ENCODE measurements at regions of chr14 and their contacts with region 1.

Region 1: DNA sequence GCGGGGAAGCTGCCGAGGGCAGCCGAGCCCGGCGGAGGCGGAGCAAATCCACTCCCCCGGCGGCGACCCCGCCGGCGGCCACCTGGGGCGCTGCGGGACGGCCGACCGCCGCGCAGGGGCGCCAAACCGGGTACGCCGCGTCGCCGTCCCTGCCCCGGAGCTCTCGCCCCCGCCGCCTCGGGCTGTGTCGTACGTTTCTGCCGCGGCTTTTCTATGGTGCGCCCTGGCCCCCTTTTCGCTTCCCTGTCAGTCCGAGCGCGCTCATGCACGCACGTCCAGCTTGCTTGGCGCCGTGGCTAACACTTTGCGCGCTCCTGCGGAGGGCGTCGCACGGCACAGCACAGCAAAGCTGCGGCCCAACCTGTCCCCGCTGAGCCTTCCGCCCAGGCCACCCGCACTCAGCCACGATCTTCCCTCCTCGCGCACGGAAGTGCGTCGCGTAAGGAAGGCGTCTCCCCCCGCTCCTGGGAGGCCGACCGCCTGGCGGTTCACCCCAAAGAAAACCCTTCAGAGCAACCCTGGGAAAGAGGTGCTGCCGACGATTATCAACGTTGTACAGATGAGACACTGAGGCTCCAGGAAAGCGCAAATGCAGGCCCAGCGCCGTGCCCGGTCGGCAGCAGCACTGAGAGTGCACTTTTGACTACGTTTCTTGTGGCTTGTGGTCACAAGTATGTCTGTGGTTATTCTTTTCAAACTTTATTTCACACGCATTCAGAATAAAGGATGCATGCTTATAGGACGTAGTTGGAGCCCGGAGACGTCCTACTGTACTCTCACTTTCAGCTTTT is at the start of gene HECTD1:
- DNase-seq: peak; percentile 84
- ATAC-seq: peak; percentile 95
- H3K4me3 ChIP-seq: peak within 1 kb of the TSS; percentile 87
- H3K27ac ChIP-seq: peak within 1 kb of the TSS; percentile 98
- H3K4me1 ChIP-seq: peaks cover 2% of the 10 kb centered on the region; the same call in 1 of the 2 replicates
- H3K27me3 ChIP-seq: no peaks in the 10 kb centered on the region
- CTCF ChIP-seq: peak; percentile 96
- POLR2A ChIP-seq: peak; percentile 45; the same call in 1 of the 2 replicates
- RAD21 ChIP-seq: peak; percentile 69
- total RNA-seq, gene HECTD1: 222 and 228 TPM in 2 replicates

Region 2: DNA sequence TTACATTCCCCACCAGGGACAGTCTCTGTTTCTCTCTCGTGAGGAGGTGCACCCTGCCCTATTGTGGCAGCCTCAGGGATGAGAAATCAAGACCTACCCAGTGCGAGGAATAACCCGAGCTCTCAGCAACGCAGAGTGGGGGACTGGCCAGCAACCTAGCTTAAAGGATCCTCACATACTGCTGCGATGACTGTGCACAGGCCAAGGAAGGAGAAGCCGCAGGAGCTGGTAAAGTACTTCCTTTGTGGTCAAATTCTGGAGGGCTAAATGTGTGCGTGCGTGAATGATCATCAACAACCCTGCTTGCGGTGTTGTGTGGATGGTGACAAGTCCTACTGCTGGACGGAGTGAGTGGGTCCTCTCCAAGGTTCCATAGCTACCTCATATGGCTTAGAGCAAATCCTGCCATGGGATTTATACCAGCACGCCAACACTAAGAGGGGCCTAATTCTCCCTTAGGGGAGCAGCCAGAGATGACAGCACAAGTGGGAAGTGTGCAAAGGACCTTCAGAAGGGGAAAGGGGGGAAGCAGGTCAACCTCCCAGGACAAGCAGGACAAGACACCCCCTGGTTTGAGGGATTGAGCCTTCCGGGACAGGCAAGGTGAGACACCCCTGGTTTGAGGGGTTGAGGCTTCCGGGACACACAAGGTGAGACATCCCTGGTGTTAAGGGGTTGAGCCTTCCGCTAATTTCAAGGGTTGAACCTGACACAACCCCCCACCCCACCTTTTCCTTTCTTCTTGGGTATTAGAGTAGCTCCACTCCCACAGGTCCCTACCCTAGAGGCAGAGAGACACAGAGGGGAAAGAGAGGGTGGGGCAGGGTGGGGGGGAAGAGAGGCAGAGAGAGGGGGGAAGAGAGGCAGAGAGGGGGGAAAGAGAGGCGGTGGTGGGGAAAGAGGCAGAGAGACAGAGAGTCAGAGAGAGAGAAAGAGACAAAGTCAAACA is 241.3 kb before region 1 on chr14:
- CTCF ChIA-PET with region 1: no interaction called
- POLR2A ChIA-PET with region 1: no interaction called
- dilution Hi-C with region 1: no loop called
- in situ Hi-C with region 1: no loop called
- intact Hi-C with region 1: no loop called
- DNase-seq: peak; percentile 26
- ATAC-seq: no peak
- H3K4me3 ChIP-seq: no peak overlapping the region
- H3K27ac ChIP-seq: no peak overlapping the region
- H3K4me1 ChIP-seq: no peaks in the 10 kb centered on the region
- H3K27me3 ChIP-seq: no peaks in the 10 kb centered on the region
- CTCF ChIP-seq: no peak
- POLR2A ChIP-seq: no peak
- RAD21 ChIP-seq: no peak

Region 3: DNA sequence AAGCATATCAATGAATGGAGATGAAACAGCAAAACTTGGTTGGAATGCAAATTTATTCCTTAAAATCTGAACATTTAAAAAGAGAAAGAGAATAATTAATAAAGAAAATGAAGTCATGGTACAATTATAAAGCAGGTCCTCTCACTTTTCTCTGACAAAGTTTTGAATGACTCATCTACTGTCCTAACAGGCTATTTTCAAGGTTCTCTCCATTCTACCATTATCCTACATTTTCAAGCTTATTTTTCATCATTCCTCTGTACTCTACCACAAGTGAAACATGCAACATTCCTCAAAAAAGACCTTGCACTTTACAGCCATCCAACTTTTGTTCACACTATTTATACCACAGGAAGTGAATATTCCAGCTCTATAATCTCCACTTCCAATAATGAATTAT is 219.4 kb before region 1 on chr14:
- CTCF ChIA-PET with region 1: no interaction called
- POLR2A ChIA-PET with region 1: no interaction called
- dilution Hi-C with region 1: no loop called
- in situ Hi-C with region 1: no loop called
- intact Hi-C with region 1: loop called (anchors 10 kb)
- DNase-seq: peak; percentile 61
- ATAC-seq: peak; percentile 54
- H3K4me3 ChIP-seq: no peak overlapping the region
- H3K27ac ChIP-seq: no peak overlapping the region
- H3K4me1 ChIP-seq: peaks cover 7% of the 10 kb centered on the region
- H3K27me3 ChIP-seq: no peaks in the 10 kb centered on the region
- CTCF ChIP-seq: no peak
- POLR2A ChIP-seq: no peak
- RAD21 ChIP-seq: no peak

Region 4: GRCh38 chr14:31137214-31137889 is 70.6 kb before region 1 on chr14:
- CTCF ChIA-PET with region 1: no interaction called
- POLR2A ChIA-PET with region 1: no interaction called
- dilution Hi-C with region 1: no loop called
- in situ Hi-C with region 1: no loop called
- intact Hi-C with region 1: loop called (anchors 5 kb)
- DNase-seq: no peak
- ATAC-seq: peak; percentile 29
- H3K4me3 ChIP-seq: no peak overlapping the region
- H3K27ac ChIP-seq: peak overlapping the region; percentile 63; the same call in 1 of the 2 replicates
- H3K4me1 ChIP-seq: peaks cover 6% of the 10 kb centered on the region
- H3K27me3 ChIP-seq: no peaks in the 10 kb centered on the region
- CTCF ChIP-seq: no peak
- POLR2A ChIP-seq: no peak
- RAD21 ChIP-seq: no peak

Region 5: GRCh38 chr14:31263485-31264133 is 55.7 kb after region 1 on chr14:
- CTCF ChIA-PET with region 1: interaction called, 5 read pairs
- POLR2A ChIA-PET with region 1: no interaction called
- dilution Hi-C with region 1: no loop called
- in situ Hi-C with region 1: no loop called
- intact Hi-C with region 1: loop called (anchors 5 kb)
- DNase-seq: peak; percentile 100
- ATAC-seq: peak; percentile 98
- H3K4me3 ChIP-seq: no peak overlapping the region
- H3K27ac ChIP-seq: peak overlapping the region; percentile 82
- H3K4me1 ChIP-seq: peaks cover 13% of the 10 kb centered on the region
- H3K27me3 ChIP-seq: no peaks in the 10 kb centered on the region
- CTCF ChIP-seq: no peak
- POLR2A ChIP-seq: no peak
- RAD21 ChIP-seq: no peak; the same call in 1 of the 2 replicates

Region 6: DNA sequence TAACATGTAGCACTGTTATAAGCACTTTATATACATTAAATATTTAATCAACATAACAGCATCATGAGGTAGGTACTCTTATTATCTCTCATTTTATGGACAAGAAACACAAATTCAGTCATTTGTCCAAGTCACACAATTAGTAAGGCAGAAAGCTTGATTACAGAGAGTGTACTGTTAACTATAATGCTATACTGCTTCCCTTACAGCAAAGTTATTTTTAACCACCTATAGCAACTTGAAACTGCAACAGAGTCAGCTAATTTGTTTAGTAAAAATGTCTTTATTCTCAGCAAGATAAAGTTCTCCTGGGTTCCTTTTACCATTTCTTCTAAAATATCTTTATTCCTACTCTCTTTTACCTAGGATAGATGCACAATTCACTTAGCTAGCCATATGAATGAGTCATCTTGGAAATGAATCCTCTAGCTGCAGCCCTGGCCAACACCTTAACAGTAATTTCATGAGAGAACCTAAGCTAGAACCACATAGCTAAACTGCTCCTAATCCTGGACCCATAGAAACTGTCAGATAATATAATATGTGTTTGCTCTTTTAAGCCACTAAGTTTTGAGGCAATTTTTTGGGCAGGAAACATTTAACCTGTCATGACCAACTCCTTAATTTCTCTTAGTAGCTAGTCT is 89.9 kb after region 1 on chr14:
- CTCF ChIA-PET with region 1: interaction called, 3 read pairs
- POLR2A ChIA-PET with region 1: no interaction called
- dilution Hi-C with region 1: no loop called
- in situ Hi-C with region 1: no loop called
- intact Hi-C with region 1: loop called (anchors 5 kb)
- DNase-seq: peak; percentile 52
- ATAC-seq: peak; percentile 56; the same call in 1 of the 2 replicates
- H3K4me3 ChIP-seq: no peak overlapping the region
- H3K27ac ChIP-seq: no peak overlapping the region
- H3K4me1 ChIP-seq: peaks cover 4% of the 10 kb centered on the region
- H3K27me3 ChIP-seq: no peaks in the 10 kb centered on the region
- CTCF ChIP-seq: no peak
- POLR2A ChIP-seq: no peak
- RAD21 ChIP-seq: no peak

Region 7: DNA sequence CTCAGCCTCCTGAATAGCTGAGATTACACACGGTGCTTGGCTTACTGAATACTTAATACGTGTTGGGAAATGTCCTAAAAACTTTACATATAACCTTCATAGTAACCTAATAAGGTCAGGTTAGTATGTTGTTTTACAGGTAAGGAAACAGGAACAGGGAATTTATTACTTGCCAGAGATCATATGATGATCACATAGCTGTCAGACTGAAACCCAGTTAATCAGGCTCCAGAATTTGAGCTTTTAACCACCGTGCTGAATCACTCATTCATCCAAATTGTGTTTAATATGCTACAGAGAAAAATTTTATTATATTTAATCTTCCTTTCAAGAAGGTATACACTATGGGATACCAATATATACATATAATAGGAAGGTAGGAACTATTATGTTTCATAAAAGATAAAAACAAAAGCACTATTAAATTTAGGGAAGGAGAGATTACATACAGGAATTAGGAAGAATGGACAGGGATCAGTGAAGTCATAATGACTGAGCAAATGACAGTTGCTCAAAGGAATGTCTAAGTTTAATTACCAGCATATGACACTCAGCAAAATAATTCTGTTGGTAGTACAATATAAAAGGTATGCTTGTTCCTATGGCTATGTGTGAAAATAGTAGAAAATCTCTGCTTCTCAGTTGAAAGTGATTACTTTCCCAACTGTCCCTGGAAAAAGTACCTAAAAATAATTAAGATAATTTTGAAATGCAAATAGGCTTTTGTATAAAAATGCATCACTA is 153.1 kb after region 1 on chr14:
- CTCF ChIA-PET with region 1: no interaction called
- POLR2A ChIA-PET with region 1: no interaction called
- dilution Hi-C with region 1: no loop called
- in situ Hi-C with region 1: no loop called
- intact Hi-C with region 1: loop called (anchors 1 kb)
- DNase-seq: peak; percentile 64
- ATAC-seq: peak; percentile 66
- H3K4me3 ChIP-seq: no peak overlapping the region
- H3K27ac ChIP-seq: no peak overlapping the region
- H3K4me1 ChIP-seq: peaks cover 3% of the 10 kb centered on the region
- H3K27me3 ChIP-seq: no peaks in the 10 kb centered on the region
- CTCF ChIP-seq: no peak
- POLR2A ChIP-seq: no peak
- RAD21 ChIP-seq: no peak

Measured in IMR-90 (cell line).